Activated CD4-positive, alpha-beta T cell treated with anti-CD3 and anti-CD28 coated beads, Interleukin-2, amount 10 ng/mL, durations not matched to agents 24 days and 14 days (primary cell): ENCODE measurements at regions of chrX and their contacts with region 1.

Region 1: GRCh38 chrX:150575416-150575808 is 7.0 kb downstream of the MTM1 start:
- DNase-seq: peak; percentile 76
- H3K4me3 Mint-ChIP-seq: peak overlapping the region; percentile 83
- H3K27ac Mint-ChIP-seq: peak overlapping the region; percentile 95
- H3K4me1 Mint-ChIP-seq: peaks cover 60% of the 10 kb centered on the region
- H3K27me3 Mint-ChIP-seq: no peaks in the 10 kb centered on the region

Region 2: DNA sequence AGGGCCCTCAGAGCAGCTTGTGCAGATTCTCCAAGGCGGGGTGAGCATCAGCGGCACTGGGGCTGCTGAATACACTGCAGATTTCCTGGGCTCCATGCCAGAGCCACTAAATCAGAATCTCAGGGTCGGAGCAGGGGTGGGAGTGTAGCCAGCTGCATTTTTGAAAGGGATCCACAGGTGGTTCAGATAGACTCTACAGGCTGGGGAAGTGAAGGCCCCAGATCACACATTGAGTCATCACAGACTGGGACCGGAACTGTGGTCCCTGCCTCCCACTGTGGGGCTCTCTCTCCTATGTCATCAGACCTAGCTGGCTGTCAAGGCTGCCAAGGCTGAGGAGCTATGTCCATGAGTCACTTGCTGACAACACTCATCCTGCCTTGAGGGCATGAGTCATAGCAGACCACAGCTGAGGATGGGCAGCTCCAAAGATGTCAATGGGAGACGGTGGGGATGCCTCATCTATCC is 374.6 kb before region 1 on chrX:
- intact Hi-C with region 1: loop called (anchors 10 kb)
- DNase-seq: peak; percentile 77
- H3K4me3 Mint-ChIP-seq: peak overlapping the region; percentile 10
- H3K27ac Mint-ChIP-seq: peak overlapping the region; percentile 56
- H3K4me1 Mint-ChIP-seq: peaks cover 8% of the 10 kb centered on the region
- H3K27me3 Mint-ChIP-seq: no peaks in the 10 kb centered on the region

Region 3: GRCh38 chrX:150486011-150486410 is 89.4 kb before region 1 on chrX:
- intact Hi-C with region 1: loop called (anchors 1 kb)
- DNase-seq: peak; percentile 86
- H3K4me3 Mint-ChIP-seq: no peak overlapping the region
- H3K27ac Mint-ChIP-seq: no peak overlapping the region
- H3K4me1 Mint-ChIP-seq: peaks cover 38% of the 10 kb centered on the region
- H3K27me3 Mint-ChIP-seq: no peaks in the 10 kb centered on the region

Region 4: GRCh38 chrX:150547375-150548115 is 27.9 kb before region 1 on chrX:
- intact Hi-C with region 1: loop called (anchors 2 kb)
- DNase-seq: peak; percentile 59
- H3K4me3 Mint-ChIP-seq: peak overlapping the region; percentile 55
- H3K27ac Mint-ChIP-seq: peak overlapping the region; percentile 77
- H3K4me1 Mint-ChIP-seq: peaks cover 20% of the 10 kb centered on the region
- H3K27me3 Mint-ChIP-seq: no peaks in the 10 kb centered on the region

Region 5: GRCh38 chrX:150635952-150636351 is 60.5 kb after region 1 on chrX:
- intact Hi-C with region 1: loop called (anchors 5 kb)
- DNase-seq: no peak
- H3K4me3 Mint-ChIP-seq: no peak overlapping the region
- H3K27ac Mint-ChIP-seq: peak overlapping the region; percentile 78
- H3K4me1 Mint-ChIP-seq: peaks cover 4% of the 10 kb centered on the region
- H3K27me3 Mint-ChIP-seq: no peaks in the 10 kb centered on the region

Region 6: GRCh38 chrX:150693775-150694574 is 118.6 kb after region 1 on chrX:
- intact Hi-C with region 1: loop called (anchors 2 kb)
- DNase-seq: peak; percentile 91
- H3K4me3 Mint-ChIP-seq: peak overlapping the region; percentile 89
- H3K27ac Mint-ChIP-seq: peak overlapping the region; percentile 97
- H3K4me1 Mint-ChIP-seq: peaks cover 58% of the 10 kb centered on the region
- H3K27me3 Mint-ChIP-seq: no peaks in the 10 kb centered on the region